ENCODE measurements at regions of chr6 and their contacts with region 1.

Region 1: GRCh38 chr6:25717866-25718740 is 36.4 kb upstream of the SLC17A4 start:
- DNase-seq: peak; percentile 31
- CTCF ChIP-seq: peak; percentile 49

Region 2: GRCh38 chr6:25223490-25223991 is 494.6 kb before region 1 on chr6:
- CTCF ChIA-PET with region 1: interaction called, 10 read pairs
- POLR2A ChIA-PET with region 1: no interaction called
- DNase-seq: peak; percentile 62
- CTCF ChIP-seq: peak; percentile 92

Region 3: GRCh38 chr6:25703005-25703404 is 15.1 kb before region 1 on chr6:
- CTCF ChIA-PET with region 1: interaction called, 12 read pairs
- POLR2A ChIA-PET with region 1: no interaction called
- DNase-seq: no peak
- CTCF ChIP-seq: no peak

Region 4: GRCh38 chr6:25732468-25733198 is 14.5 kb after region 1 on chr6:
- CTCF ChIA-PET with region 1: interaction called, 18 read pairs
- POLR2A ChIA-PET with region 1: no interaction called
- DNase-seq: no peak
- CTCF ChIP-seq: no peak

Region 5: GRCh38 chr6:26003102-26003694 is 285.1 kb after region 1 on chr6:
- CTCF ChIA-PET with region 1: interaction called, 12 read pairs
- POLR2A ChIA-PET with region 1: no interaction called
- DNase-seq: peak; percentile 63
- CTCF ChIP-seq: peak; percentile 82

Measured in GM10248 (cell line).